Endothelial cell of umbilical vein (primary cell): ENCODE measurements at regions of chr1 and their contacts with region 1.

Region 1: DNA sequence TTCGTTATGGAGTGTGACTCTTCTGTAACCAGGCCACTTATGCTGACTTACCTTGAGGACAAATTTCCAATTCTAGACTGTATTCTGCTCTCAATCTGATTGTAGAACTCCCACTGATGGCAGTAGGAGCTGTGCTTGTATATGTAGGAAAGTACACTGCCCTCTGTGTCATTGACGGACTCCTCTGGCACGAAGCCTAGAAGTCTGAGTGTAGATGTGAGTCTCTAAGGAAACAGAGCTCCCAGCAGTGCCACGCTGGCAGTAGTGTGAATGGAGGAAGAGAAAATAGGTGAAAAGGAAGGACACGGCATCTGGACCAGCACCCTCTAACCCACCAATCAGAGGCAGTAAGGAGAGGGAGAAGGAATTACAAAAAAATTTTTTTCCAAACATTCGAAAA is 130.4 kb upstream of the ADGRL2 start:
- DNase-seq: peak; percentile 98
- H3K4me3 ChIP-seq: no peak overlapping the region
- H3K27ac ChIP-seq: no peak overlapping the region
- H3K4me1 ChIP-seq: peaks cover 8% of the 10 kb centered on the region
- H3K27me3 ChIP-seq: no peaks in the 10 kb centered on the region
- CTCF ChIP-seq: no peak
- POLR2A ChIP-seq: no peak

Region 2: GRCh38 chr1:81681586-81682266 is 11.4 kb after region 1 on chr1:
- CTCF ChIA-PET with region 1: interaction called, 5 read pairs
- POLR2A ChIA-PET with region 1: no interaction called
- dilution Hi-C with region 1: no loop called
- intact Hi-C with region 1: loop called (anchors 2 kb)
- DNase-seq: peak; percentile 92
- H3K4me3 ChIP-seq: peak overlapping the region in 1 of 3 experiments; percentile 34
- H3K27ac ChIP-seq: peak overlapping the region; percentile 50
- H3K4me1 ChIP-seq: peaks cover 24% of the 10 kb centered on the region
- H3K27me3 ChIP-seq: no peaks in the 10 kb centered on the region
- CTCF ChIP-seq: no peak
- POLR2A ChIP-seq: no peak